B cell (primary cell): ENCODE measurements at regions of chr12 and their contacts with region 1.

Region 1: DNA sequence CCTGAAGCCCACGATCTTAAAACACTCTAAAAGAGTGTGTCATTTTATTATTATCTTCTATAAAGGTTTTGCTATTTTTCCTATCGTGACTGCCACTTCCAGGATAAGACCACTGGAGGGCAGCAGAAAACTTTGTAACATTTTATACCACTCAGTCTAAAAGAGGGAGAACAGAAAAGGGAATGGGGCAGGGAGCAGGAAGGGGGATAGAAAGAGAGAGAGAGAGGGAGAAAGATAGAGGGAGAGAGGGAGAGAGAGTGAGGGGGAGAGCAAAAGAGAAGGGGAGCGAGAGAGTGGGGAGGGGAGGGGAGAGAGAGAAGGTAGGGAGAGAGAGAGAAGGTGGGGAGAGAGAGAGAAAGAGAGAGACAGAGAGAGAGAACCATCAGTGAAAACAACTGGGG is 2.0 kb upstream of the ART4 start:
- DNase-seq: peak; percentile 72
- ATAC-seq: peak; percentile 81
- H3K4me3 ChIP-seq: no peak overlapping the region
- H3K4me3 Mint-ChIP-seq: no peak overlapping the region
- H3K27ac ChIP-seq: no peak overlapping the region
- H3K27ac Mint-ChIP-seq: no peak overlapping the region
- H3K4me1 ChIP-seq: peaks cover 0 to 4% of the 10 kb centered on the region in 2 donors
- H3K4me1 Mint-ChIP-seq: peaks cover 9% of the 10 kb centered on the region
- H3K27me3 ChIP-seq: no peaks in the 10 kb centered on the region
- H3K27me3 Mint-ChIP-seq: no peaks in the 10 kb centered on the region
- CTCF ChIP-seq: peak; percentile 77

Region 2: GRCh38 chr12:14678547-14679150 is 166.7 kb before region 1 on chr12:
- CTCF ChIA-PET with region 1: no interaction called
- POLR2A ChIA-PET with region 1: no interaction called
- intact Hi-C with region 1: no loop called
- DNase-seq: no peak
- ATAC-seq: no peak
- H3K4me3 ChIP-seq: no peak overlapping the region
- H3K4me3 Mint-ChIP-seq: no peak overlapping the region
- H3K27ac ChIP-seq: no peak overlapping the region
- H3K27ac Mint-ChIP-seq: no peak overlapping the region
- H3K4me1 ChIP-seq: no peaks in the 10 kb centered on the region
- H3K4me1 Mint-ChIP-seq: no peaks in the 10 kb centered on the region
- H3K27me3 ChIP-seq: peaks cover 0 to 3% (median 1%) of the 10 kb centered on the region in 4 experiments
- H3K27me3 Mint-ChIP-seq: peaks cover 24% of the 10 kb centered on the region
- CTCF ChIP-seq: no peak

Region 3: GRCh38 chr12:14884458-14884878 is 39.1 kb after region 1 on chr12:
- CTCF ChIA-PET with region 1: interaction called, 4 read pairs
- POLR2A ChIA-PET with region 1: no interaction called
- intact Hi-C with region 1: loop called (anchors 5 kb)
- DNase-seq: peak; percentile 89
- ATAC-seq: peak; percentile 95
- H3K4me3 ChIP-seq: peak overlapping the region in 1 of 5 experiments; percentile 11
- H3K4me3 Mint-ChIP-seq: peak overlapping the region; percentile 77
- H3K27ac ChIP-seq: peak overlapping the region in 1 of 2 donors; percentile 67
- H3K27ac Mint-ChIP-seq: peak overlapping the region; percentile 80
- H3K4me1 ChIP-seq: peaks cover 27 to 44% of the 10 kb centered on the region in 2 donors
- H3K4me1 Mint-ChIP-seq: peaks cover 48% of the 10 kb centered on the region
- H3K27me3 ChIP-seq: peaks cover 0 to 12% (median 8%) of the 10 kb centered on the region in 4 experiments
- H3K27me3 Mint-ChIP-seq: peaks cover 38% of the 10 kb centered on the region
- CTCF ChIP-seq: no peak

Region 4: DNA sequence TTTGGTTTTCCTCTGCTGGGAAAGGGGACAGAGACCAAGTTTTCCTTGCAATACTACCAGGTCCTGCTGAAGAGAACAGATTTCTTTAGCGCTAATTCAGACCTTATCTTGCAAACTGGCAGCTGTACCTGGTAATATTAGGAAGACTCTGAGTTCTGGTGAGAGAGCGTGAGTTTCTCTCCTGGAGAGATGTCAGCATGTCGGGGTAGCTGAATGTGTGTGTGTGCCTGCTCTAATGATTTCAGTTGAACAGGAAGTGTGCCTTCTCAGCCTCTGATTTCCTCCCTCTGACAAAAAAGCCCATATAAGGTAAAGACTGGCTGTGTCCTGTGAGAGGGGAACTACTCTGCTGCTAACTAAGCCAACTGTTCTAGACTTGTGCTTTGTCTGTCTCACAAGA is 103.3 kb after region 1 on chr12:
- CTCF ChIA-PET with region 1: interaction called, 4 read pairs
- POLR2A ChIA-PET with region 1: no interaction called
- intact Hi-C with region 1: loop called (anchors 5 kb)
- DNase-seq: peak; percentile 88
- ATAC-seq: peak; percentile 94
- H3K4me3 ChIP-seq: peak overlapping the region in 3 of 5 experiments; percentile 26 to 53 (median 27)
- H3K4me3 Mint-ChIP-seq: peak overlapping the region; percentile 84
- H3K27ac ChIP-seq: peak overlapping the region; percentile 65 to 94
- H3K27ac Mint-ChIP-seq: peak overlapping the region; percentile 97
- H3K4me1 ChIP-seq: peaks cover 61 to 71% of the 10 kb centered on the region in 2 donors
- H3K4me1 Mint-ChIP-seq: peaks cover 72% of the 10 kb centered on the region
- H3K27me3 ChIP-seq: no peaks in the 10 kb centered on the region
- H3K27me3 Mint-ChIP-seq: no peaks in the 10 kb centered on the region
- CTCF ChIP-seq: no peak

Region 5: DNA sequence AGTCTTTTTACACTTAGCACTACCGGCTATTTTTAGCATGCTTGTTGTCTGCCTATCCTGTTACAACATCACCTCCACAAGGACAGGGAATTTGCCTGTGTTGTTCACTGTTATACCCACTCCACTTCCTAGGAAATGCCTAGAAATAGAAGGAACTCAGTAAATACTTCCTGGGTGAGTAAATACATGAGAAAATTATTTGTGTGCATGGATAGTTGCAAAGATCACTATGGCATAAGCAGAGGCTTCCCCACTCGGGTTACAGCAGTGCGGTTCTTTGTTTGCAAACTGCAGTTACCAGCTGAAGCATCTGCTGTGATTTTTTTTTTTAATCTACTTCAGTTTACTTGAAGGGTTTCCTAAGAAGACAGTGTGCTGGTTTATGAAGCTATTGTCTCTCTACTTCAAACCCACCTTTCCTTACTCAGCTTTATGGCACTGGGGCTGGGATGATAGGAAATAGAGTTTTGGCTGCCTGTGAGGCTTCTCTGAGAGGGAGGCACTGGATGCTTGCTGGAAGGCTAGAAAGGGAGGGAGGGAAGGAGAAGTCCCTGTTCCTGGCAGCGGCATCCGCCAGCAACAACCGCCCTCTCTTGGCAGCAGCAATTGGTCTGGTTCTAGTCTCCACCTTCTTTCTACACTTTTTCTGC is 156.5 kb after region 1 on chr12:
- CTCF ChIA-PET with region 1: interaction called, 192 read pairs
- POLR2A ChIA-PET with region 1: no interaction called
- intact Hi-C with region 1: no loop called
- DNase-seq: no peak
- ATAC-seq: no peak
- H3K4me3 ChIP-seq: no peak overlapping the region
- H3K4me3 Mint-ChIP-seq: no peak overlapping the region
- H3K27ac ChIP-seq: no peak overlapping the region
- H3K27ac Mint-ChIP-seq: no peak overlapping the region
- H3K4me1 ChIP-seq: no peaks in the 10 kb centered on the region
- H3K4me1 Mint-ChIP-seq: no peaks in the 10 kb centered on the region
- H3K27me3 ChIP-seq: peaks cover 0 to 22% (median 9%) of the 10 kb centered on the region in 4 experiments
- H3K27me3 Mint-ChIP-seq: peaks cover 28% of the 10 kb centered on the region
- CTCF ChIP-seq: no peak

Region 6: DNA sequence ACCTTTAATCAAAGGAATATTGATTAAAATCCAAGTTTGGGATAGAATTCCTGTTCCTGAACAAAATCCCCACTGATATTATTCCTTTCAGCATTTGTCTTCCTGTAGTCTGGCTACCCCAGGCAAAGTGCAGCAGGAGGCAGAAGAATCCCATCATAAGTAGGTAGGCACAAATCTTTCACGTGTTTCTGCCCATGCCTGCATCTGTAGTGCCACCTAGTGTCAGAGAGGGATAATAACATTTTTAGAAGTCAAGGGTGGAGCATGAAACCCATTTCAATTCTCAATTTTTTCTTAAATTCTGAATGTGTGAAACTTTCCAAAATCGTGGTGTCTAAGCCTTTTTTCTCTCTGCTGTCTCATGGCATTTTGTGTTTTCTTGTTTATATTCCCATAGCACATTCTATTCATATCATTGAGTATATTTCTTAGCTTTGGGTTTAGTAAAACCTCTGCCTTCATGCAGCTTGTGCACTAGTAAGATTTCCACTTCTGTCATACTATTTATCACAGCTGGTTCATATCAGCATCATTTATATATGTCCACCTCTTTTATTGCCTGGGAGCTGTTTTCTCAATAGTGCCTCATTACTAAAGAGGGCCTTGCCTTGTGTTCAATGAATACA is 423.7 kb after region 1 on chr12:
- CTCF ChIA-PET with region 1: interaction called, 5 read pairs
- POLR2A ChIA-PET with region 1: no interaction called
- intact Hi-C with region 1: loop called (anchors 1 kb)
- DNase-seq: peak; percentile 63
- ATAC-seq: peak; percentile 71
- H3K4me3 ChIP-seq: no peak overlapping the region
- H3K4me3 Mint-ChIP-seq: no peak overlapping the region
- H3K27ac ChIP-seq: no peak overlapping the region
- H3K27ac Mint-ChIP-seq: no peak overlapping the region
- H3K4me1 ChIP-seq: no peaks in the 10 kb centered on the region
- H3K4me1 Mint-ChIP-seq: no peaks in the 10 kb centered on the region
- H3K27me3 ChIP-seq: no peaks in the 10 kb centered on the region
- H3K27me3 Mint-ChIP-seq: peaks cover 3% of the 10 kb centered on the region
- CTCF ChIP-seq: peak; percentile 97